ENCODE measurements at regions of chr5 and their contacts with region 1.

Region 1: GRCh38 chr5:178232124-178232919 is at the start of gene PHYKPL:
- DNase-seq: peak; percentile 63
- H3K4me3 Mint-ChIP-seq: peak within 1 kb of the TSS; percentile 86
- H3K27ac Mint-ChIP-seq: peak within 1 kb of the TSS; percentile 80
- H3K4me1 Mint-ChIP-seq: peaks cover 55% of the 10 kb centered on the region
- H3K27me3 Mint-ChIP-seq: no peaks in the 10 kb centered on the region
- total RNA-seq, gene PHYKPL: 50.9 to 51.2 TPM

Region 2: GRCh38 chr5:178204182-178204894 is 28.0 kb before region 1 on chr5 and contains the start of gene HNRNPAB:
- CTCF ChIA-PET with region 1: interaction called, 5 read pairs
- intact Hi-C with region 1: loop called (anchors 1 kb)
- DNase-seq: peak; percentile 96
- H3K4me3 Mint-ChIP-seq: peak within 1 kb of the TSS; percentile 96
- H3K27ac Mint-ChIP-seq: peak within 1 kb of the TSS; percentile 97
- H3K4me1 Mint-ChIP-seq: peaks cover 31% of the 10 kb centered on the region
- H3K27me3 Mint-ChIP-seq: peaks cover 2% of the 10 kb centered on the region
- total RNA-seq, gene HNRNPAB: 251 to 262 TPM

Region 3: DNA sequence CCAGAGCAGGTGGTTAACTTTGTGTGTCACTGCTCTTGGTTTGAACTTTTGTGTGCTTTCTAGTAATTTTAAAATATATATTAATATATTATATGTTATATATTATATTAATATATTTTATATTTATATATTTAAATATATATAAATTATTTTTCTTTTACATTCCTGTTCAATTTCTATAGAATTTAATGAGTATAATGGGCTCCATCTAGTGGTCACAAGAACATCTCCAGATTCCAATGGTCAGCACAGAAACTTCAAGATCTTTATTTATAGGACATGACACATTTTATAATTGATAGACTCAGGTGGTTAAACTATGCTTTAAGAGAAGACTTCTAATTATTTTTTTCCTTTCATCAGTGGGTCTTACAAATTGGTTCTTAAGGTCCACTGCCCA is 318.7 kb after region 1 on chr5:
- CTCF ChIA-PET with region 1: no interaction called
- intact Hi-C with region 1: loop called (anchors 1 kb)
- DNase-seq: no peak
- H3K4me3 Mint-ChIP-seq: no peak overlapping the region
- H3K27ac Mint-ChIP-seq: no peak overlapping the region
- H3K4me1 Mint-ChIP-seq: no peaks in the 10 kb centered on the region
- H3K27me3 Mint-ChIP-seq: no peaks in the 10 kb centered on the region

Region 4: GRCh38 chr5:178590141-178590923 is 358.0 kb after region 1 on chr5 and contains the start of gene COL23A1:
- CTCF ChIA-PET with region 1: no interaction called
- intact Hi-C with region 1: loop called (anchors 1 kb)
- DNase-seq: peak; percentile 63
- H3K4me3 Mint-ChIP-seq: peak within 1 kb of the TSS; percentile 57
- H3K27ac Mint-ChIP-seq: no peak within 1 kb of the TSS
- H3K4me1 Mint-ChIP-seq: peaks cover 7% of the 10 kb centered on the region
- H3K27me3 Mint-ChIP-seq: peaks cover 45% of the 10 kb centered on the region
- total RNA-seq, gene COL23A1: 0.07 TPM in 1 of 2 experiments, not detected in the other

Measured in activated naive CD4-positive, alpha-beta T cell treated with anti-CD3 and anti-CD28 coated beads for 36 hours (primary cell).